ENCODE measurements at regions of chr12 and their contacts with region 1.

Region 1: GRCh38 chr12:2113119-2113912 is 60.5 kb downstream of the CACNA1C start:
- DNase-seq: peak; percentile 84
- ATAC-seq: peak; percentile 79

Region 2: DNA sequence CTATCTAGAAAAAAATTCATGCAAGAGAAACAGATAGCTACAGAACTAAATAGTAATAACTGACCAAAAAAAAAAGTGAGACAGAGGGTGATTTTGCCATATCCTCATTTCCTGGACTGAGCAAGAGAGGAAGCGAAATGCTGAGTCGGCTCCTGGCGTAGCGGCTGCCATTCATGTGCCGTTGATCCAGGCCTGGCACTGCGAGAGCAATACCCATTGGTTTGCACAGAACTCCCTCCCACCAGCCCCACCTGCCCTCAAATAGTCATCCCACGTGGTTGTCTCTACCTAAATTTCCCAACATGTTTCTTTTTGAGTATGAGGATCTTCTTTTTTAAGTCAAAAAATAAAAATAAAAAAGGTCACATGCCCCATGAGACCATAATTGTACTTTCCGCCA is 493.7 kb before region 1 on chr12:
- intact Hi-C with region 1: no loop called
- DNase-seq: peak; percentile 80
- ATAC-seq: peak; percentile 63

Region 3: DNA sequence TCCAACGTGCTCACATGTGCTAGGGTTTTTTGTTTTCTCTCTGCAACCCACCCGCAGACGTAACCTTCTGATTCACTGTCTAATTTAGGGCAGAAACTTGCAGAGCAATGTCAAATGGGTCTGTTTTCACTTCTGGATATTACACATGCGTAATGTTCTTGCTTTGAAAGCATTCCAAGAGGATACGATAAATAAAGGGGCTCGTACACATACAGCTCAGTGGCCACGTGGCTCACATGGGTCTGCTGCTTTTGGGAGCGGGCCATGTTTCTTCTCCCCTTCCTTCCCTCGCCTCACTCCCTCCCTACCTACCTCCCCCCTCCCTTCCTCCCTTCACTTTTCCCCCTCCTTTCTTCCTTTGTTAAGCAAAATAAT is 37.1 kb before region 1 on chr12:
- intact Hi-C with region 1: loop called (anchors 5 kb)
- DNase-seq: no peak
- ATAC-seq: peak; percentile 22